Cardiac septum (tissue), 1 donor: ENCODE measurements at regions of chr1 and their contacts with region 1.

Region 1: GRCh38 chr1:205477759-205478247 is 22.0 kb upstream of the BLACAT1 start:
- DNase-seq: no peak

Region 2: DNA sequence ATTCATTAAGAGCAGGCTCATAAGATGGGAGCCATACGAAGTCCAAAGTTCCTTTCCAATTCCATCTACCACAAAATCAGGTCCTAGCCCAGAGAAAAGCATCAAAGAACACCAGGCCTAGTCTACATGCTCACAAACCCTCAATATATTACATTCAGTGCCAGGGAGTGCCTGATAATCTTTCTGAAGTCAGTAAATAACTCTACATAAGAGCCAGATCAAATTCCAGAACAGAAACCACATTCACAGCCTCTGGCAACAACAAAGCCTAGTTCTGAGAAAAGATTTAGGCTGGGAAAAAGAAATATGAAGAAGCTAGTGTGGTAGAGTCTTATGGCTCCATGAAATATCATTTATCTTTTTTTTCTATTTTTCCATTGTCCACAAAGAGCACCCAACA is 315.5 kb before region 1 on chr1:
- intact Hi-C with region 1: no loop called
- DNase-seq: no peak

Region 3: DNA sequence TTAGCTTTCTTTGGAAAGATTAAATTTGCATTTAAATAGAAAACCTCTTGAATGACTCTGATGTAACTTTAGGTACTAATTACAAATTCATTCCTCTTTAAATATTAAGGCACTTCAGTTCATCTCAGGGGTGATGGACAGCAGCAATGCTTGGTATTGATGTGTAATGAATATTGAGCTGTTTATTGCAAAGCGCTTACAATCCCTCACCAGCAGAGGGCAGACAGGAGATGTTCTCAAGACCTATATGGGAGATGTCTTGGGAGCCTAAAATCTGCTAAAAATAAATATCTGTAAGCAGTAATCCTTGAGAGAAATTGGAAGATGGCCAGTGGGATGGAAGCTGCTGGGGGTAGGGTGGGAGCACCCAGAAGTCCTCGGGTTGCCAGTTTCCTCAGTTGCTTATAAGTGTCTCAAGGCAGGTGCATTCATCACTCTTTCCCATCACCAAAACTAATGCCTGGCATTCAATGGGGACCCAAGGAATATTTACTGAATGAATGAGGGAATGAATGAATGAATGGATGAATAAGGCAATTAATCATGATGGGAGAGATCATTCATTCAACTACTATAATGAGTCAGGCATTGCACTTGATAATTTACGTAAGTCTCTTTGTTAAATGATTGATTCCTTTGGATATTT is 123.4 kb before region 1 on chr1:
- intact Hi-C with region 1: loop called (anchors 2 kb)
- DNase-seq: no peak

Region 4: GRCh38 chr1:205438213-205439157 is 39.3 kb before region 1 on chr1:
- intact Hi-C with region 1: loop called (anchors 5 kb)
- DNase-seq: peak; percentile 85